Activated CD4-positive, alpha-beta memory T cell treated with anti-CD3 and anti-CD28 coated beads for 36 hours (primary cell): ENCODE measurements at regions of chr1 and their contacts with region 1.

Region 1: GRCh38 chr1:220113136-220113695 is 19.3 kb downstream of the IARS2 start:
- DNase-seq: no peak
- H3K4me3 Mint-ChIP-seq: no peak overlapping the region
- H3K27ac Mint-ChIP-seq: no peak overlapping the region
- H3K4me1 Mint-ChIP-seq: peaks cover 8% of the 10 kb centered on the region
- H3K27me3 Mint-ChIP-seq: no peaks in the 10 kb centered on the region

Region 2: GRCh38 chr1:220089650-220090556 is 23.3 kb before region 1 on chr1 and contains the start of gene BPNT1:
- CTCF ChIA-PET with region 1: interaction called, 16 read pairs
- POLR2A ChIA-PET with region 1: no interaction called
- intact Hi-C with region 1: loop called (anchors 2 kb)
- DNase-seq: peak; percentile 98
- H3K4me3 Mint-ChIP-seq: peak within 1 kb of the TSS; percentile 88
- H3K27ac Mint-ChIP-seq: peak within 1 kb of the TSS; percentile 82
- H3K4me1 Mint-ChIP-seq: peaks cover 10% of the 10 kb centered on the region
- H3K27me3 Mint-ChIP-seq: no peaks in the 10 kb centered on the region
- total RNA-seq, gene BPNT1: 20.5 to 25.8 TPM

Region 3: DNA sequence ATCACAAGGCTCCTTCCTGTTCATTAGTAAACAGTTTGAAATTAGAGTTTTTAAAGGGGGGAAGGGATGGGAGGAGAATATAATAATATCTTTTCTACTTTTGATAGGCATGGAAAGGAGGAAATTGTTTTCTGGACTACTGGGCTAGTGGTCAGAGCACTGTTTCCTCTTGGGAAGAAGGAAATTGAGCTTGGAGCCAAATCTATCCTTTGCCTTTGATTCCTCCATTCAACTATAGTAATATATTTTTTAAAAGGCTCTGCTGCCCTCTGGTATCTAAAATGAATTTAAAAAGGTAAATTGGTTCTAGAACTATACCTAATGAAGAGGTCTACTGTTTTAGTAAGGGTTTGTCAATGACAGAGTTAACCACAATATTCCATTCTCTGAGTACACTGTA is 13.4 kb before region 1 on chr1:
- CTCF ChIA-PET with region 1: interaction called, 12 read pairs
- POLR2A ChIA-PET with region 1: no interaction called
- intact Hi-C with region 1: loop called (anchors 2 kb)
- DNase-seq: no peak
- H3K4me3 Mint-ChIP-seq: no peak overlapping the region
- H3K27ac Mint-ChIP-seq: no peak overlapping the region
- H3K4me1 Mint-ChIP-seq: peaks cover 12% of the 10 kb centered on the region
- H3K27me3 Mint-ChIP-seq: no peaks in the 10 kb centered on the region

Region 4: DNA sequence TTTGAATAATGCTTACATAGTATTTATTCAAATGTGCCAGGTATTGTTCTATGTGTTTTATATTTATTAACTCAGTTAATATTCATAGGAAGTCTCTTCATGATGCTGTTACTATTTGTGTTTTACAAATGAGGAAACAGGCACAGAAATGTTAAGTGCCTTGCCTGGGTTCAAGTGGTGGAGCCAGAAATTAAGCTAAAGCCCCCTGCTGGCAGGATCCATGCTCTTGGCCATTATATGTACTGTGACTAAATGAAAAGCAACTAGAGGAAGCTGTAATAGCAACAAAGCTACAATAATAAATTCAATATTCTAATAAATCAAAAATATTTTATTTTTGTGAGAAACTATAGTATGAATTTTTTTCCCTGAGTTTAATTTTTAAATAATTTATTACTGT is 10.7 kb after region 1 on chr1:
- CTCF ChIA-PET with region 1: interaction called, 20 read pairs
- POLR2A ChIA-PET with region 1: no interaction called
- intact Hi-C with region 1: no loop called
- DNase-seq: no peak
- H3K4me3 Mint-ChIP-seq: no peak overlapping the region
- H3K27ac Mint-ChIP-seq: no peak overlapping the region
- H3K4me1 Mint-ChIP-seq: peaks cover 15% of the 10 kb centered on the region
- H3K27me3 Mint-ChIP-seq: no peaks in the 10 kb centered on the region

Region 5: GRCh38 chr1:220137019-220137786 is 24.0 kb after region 1 on chr1:
- CTCF ChIA-PET with region 1: interaction called, 10 read pairs
- POLR2A ChIA-PET with region 1: no interaction called
- intact Hi-C with region 1: loop called (anchors 2 kb)
- DNase-seq: no peak
- H3K4me3 Mint-ChIP-seq: no peak overlapping the region
- H3K27ac Mint-ChIP-seq: peak overlapping the region; percentile 62
- H3K4me1 Mint-ChIP-seq: peaks cover 11% of the 10 kb centered on the region
- H3K27me3 Mint-ChIP-seq: no peaks in the 10 kb centered on the region